ENCODE measurements at regions of chr16 and their contacts with region 1.

Region 1: DNA sequence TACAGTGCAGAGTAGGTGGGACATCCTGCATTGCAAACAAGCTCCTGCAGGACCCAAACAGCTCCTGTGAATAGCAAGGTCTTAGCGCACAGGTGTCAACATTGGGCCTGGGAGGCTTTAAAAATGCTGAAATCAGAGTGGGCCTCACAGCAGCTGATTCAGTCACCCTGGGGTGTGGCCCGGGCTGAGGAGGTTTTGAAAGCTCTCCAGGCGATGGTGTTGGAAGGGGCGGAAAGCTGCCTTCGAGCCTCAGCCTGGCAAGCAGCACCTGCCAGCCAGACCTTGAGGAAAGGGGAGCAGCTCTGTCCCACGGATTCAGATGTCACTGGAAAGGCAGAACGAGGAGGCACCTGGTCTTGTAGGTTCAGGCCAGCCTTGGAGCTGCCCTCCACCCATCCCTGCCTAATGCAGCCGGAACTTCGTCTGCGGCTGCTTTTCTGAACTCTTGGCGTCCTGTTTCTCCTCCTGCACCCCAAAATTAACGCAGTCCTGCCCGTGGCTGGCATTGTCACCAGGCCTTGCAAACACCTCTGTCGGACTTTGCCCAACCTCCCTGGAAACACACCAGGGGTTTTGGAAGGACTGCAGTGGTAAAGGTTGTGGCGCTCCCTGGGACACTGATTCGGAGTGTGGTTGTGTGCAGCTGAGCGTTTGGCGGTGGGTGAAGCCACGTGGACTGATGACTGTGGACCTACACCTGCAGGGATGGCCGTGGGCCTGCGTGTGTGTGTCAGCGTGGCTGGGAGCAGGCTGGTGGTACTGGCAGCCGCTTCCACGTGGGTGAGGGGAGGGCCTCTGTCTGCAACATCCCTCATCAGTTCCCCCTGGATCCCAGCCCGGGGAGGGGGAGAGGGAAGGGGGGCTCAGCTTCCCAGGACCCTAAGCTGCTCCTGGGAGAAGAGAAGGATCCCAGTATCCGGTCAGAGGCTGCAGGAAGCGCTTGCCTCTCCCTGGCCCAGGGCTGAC is 3.4 kb downstream of the NECAB2 start:
- DNase-seq: no peak
- H3K4me3 ChIP-seq: no peak overlapping the region
- H3K27ac ChIP-seq: no peak overlapping the region
- H3K4me1 ChIP-seq: no peaks in the 10 kb centered on the region
- H3K27me3 ChIP-seq: no peaks in the 10 kb centered on the region
- CTCF ChIP-seq: no peak

Region 2: GRCh38 chr16:83581082-83581481 is 390.4 kb before region 1 on chr16:
- CTCF ChIA-PET with region 1: no interaction called
- POLR2A ChIA-PET with region 1: no interaction called
- intact Hi-C with region 1: no loop called
- DNase-seq: no peak
- H3K4me3 ChIP-seq: no peak overlapping the region
- H3K27ac ChIP-seq: no peak overlapping the region
- H3K4me1 ChIP-seq: no peaks in the 10 kb centered on the region
- H3K27me3 ChIP-seq: peaks cover 38% of the 10 kb centered on the region
- CTCF ChIP-seq: no peak

Region 3: GRCh38 chr16:83878838-83879237 is 92.6 kb before region 1 on chr16:
- CTCF ChIA-PET with region 1: no interaction called
- POLR2A ChIA-PET with region 1: no interaction called
- intact Hi-C with region 1: no loop called
- DNase-seq: peak in 1 of 2 experiments; percentile 41
- H3K4me3 ChIP-seq: no peak overlapping the region
- H3K27ac ChIP-seq: no peak overlapping the region
- H3K4me1 ChIP-seq: no peaks in the 10 kb centered on the region
- H3K27me3 ChIP-seq: peaks cover 94% of the 10 kb centered on the region
- CTCF ChIP-seq: peak; percentile 72

Region 4: DNA sequence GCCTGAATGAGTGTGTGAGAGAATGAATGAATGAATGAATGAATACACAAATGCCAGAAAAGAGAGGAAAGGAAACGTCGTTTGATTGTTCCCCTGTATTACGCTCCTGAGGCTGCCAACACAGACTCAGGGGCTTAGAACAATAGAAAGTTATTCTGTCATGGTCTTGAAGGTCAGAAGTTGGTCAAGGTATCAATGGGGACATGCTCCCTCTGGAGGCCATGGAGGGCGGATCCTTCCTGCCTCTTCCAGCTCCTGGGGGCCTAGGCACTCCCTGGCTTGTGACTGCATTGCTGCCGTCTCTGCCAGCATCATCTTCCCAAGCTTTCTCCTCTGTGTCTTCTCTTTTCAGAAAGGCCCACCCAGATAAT is 72.7 kb after region 1 on chr16:
- CTCF ChIA-PET with region 1: no interaction called
- POLR2A ChIA-PET with region 1: no interaction called
- intact Hi-C with region 1: loop called (anchors 5 kb)
- DNase-seq: no peak
- H3K4me3 ChIP-seq: no peak overlapping the region
- H3K27ac ChIP-seq: no peak overlapping the region
- H3K4me1 ChIP-seq: no peaks in the 10 kb centered on the region
- H3K27me3 ChIP-seq: peaks cover 28% of the 10 kb centered on the region
- CTCF ChIP-seq: peak; percentile 53; the same call in 1 of the 2 replicates

Region 5: DNA sequence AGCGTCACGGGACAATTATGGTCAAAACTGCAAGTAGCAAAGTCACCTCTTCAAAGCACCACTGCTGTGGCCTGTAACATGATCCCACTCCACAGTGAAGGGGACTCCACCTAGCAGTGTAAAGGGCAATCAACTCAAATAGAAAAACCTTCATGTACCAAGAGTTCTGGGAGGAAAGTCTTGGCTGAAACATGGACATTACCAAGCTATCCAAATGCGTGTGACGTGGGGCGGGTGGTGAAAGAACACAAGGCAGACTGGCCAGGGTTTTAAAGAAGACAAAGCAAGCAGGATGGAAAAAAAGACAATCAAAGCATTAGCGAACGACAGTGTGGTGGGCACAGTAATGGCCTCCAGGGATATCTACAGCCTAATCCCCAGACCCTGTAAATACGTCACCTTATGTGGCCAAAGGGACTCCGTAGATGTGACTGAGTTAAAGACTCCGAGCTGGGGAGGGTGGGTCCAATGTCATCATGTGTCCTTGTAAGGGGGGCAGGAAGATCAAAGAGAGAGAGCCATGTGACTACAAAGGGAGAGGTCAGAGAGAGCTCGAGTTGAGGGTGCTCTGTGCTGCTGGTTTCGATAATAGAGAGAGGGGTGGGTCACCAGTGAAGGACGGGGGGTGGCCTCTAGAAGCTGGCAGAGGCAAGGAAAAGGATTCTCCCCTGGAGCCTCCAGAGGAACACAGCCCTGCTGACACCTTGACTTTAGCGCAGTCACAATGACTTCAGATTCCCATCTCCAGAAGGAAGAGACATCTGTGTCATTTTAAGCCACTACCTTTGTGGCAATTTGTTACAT is 167.6 kb after region 1 on chr16:
- CTCF ChIA-PET with region 1: no interaction called
- POLR2A ChIA-PET with region 1: no interaction called
- intact Hi-C with region 1: no loop called
- DNase-seq: peak; percentile 53 to 67
- H3K4me3 ChIP-seq: no peak overlapping the region
- H3K27ac ChIP-seq: peak overlapping the region; percentile 54
- H3K4me1 ChIP-seq: peaks cover 28% of the 10 kb centered on the region
- H3K27me3 ChIP-seq: no peaks in the 10 kb centered on the region
- CTCF ChIP-seq: no peak